OCI-LY7 (cell line): ENCODE measurements at regions of chr7 and their contacts with region 1.

Region 1: DNA sequence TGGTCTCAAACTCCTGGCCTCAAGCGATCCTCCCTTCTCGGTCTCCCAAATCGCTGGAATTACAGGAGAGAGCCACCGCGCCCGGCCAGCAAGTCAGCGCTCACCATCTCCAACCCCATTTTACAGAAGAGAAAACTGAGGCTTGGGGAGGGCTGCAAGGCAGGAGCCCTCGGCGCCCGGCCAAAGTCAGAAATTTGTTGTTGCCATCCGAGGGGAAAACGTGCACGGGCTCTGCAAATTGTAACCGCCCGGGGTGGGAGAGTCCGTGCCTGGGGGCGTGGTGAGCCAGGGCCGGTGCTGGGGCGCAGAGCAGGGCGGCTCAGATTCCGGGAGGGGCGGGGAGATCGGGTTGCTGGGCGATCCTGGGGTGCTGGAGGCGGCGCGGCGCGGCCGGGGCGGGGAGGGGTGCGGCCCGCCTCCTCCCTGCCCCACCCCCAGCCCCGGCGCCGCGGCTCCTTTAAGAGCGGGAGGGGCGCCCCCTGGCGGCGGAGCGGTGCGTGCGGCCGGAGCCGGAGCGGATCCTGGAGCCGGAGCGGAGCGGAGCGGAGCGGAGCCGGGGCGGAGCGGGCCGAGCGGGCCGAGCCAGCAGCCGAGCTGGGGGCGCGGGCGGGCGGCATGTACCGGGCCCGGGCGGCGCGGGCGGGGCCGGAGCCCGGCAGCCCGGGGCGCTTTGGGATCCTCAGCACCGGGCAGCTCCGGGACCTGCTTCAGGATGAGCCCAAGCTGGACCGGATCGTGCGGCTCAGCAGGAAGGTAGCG is at the start of gene VPS37D:
- DNase-seq: peak; percentile 91
- H3K4me3 ChIP-seq: peak within 1 kb of the TSS; percentile 80
- H3K27ac ChIP-seq: no peak within 1 kb of the TSS
- H3K4me1 ChIP-seq: peaks cover 11% of the 10 kb centered on the region
- CTCF ChIP-seq: peak; percentile 75
- total RNA-seq, gene VPS37D: 2.4 and 5.3 TPM in 2 replicates

Region 2: GRCh38 chr7:73606801-73607691 is 60.5 kb before region 1 on chr7:
- CTCF ChIA-PET with region 1: no interaction called
- POLR2A ChIA-PET with region 1: interaction called, 3 read pairs
- intact Hi-C with region 1: loop called (anchors 1 kb)
- DNase-seq: peak; percentile 74
- H3K4me3 ChIP-seq: no peak overlapping the region
- H3K27ac ChIP-seq: no peak overlapping the region
- H3K4me1 ChIP-seq: no peaks in the 10 kb centered on the region
- CTCF ChIP-seq: peak; percentile 96

Region 3: DNA sequence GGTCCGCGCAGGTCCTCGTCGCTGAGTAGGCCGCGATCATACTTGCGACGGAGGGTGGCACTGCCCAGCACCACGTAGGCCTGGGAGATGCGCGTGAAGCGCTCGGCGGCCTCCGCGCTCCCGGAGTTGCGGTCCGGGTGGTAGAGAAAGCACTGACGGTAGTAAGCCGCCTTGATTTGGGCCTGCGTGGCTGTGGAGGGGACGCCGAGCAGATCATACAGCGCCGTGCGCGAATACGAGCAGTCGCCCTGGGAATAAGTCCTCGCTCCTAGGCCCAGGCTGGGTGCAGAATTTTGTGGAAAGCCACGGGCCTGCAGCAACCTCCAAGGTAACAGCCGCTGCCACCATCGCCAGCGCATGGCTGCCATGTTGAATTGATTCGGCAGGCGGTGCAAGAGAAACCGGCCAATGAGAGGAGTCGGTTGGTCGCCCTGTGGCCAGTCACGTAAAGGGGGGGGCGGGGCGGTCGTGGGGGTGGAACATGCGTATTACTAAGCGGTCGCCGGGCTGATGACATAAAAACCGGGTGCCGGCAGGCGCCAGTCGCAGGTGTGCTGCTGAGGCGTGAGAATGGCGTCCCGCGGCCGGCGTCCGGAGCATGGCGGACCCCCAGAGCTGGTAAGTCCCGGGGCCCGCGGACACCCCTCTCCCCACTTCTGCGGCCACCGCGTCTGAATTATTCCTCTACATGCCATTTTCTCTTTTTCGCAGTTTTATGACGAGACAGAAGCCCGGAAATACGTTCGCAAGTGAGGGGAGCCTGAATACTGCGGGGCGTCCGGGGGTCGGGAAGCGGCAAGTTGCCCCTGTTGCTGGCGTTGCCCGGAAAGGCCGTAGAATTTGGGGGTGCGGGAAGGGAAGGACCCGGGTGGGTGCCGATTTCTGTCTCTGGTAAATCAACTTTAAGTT is 15.8 kb after region 1 on chr7 and contains the starts of genes BUD23 and DNAJC30:
- CTCF ChIA-PET with region 1: no interaction called
- POLR2A ChIA-PET with region 1: no interaction called
- intact Hi-C with region 1: loop called (anchors 1 kb)
- DNase-seq: peak; percentile 95
- H3K4me3 ChIP-seq: peak within 1 kb of the TSS; percentile 85
- H3K27ac ChIP-seq: peak within 1 kb of the TSS; percentile 39
- H3K4me1 ChIP-seq: peaks cover 32% of the 10 kb centered on the region
- CTCF ChIP-seq: no peak
- total RNA-seq, gene BUD23: 58.1 and 65.0 TPM in 2 replicates
- total RNA-seq, gene DNAJC30: 4.0 and 5.9 TPM in 2 replicates